ENCODE measurements at regions of chr1 and their contacts with region 1.

Region 1: GRCh38 chr1:203172128-203173010 is 3.3 kb downstream of the MYBPH start:
- DNase-seq: peak; percentile 77
- H3K4me3 ChIP-seq: no peak overlapping the region
- H3K27ac ChIP-seq: no peak overlapping the region
- H3K4me1 ChIP-seq: peaks cover 5 to 7% of the 10 kb centered on the region in 2 experiments; a peak in 2 of 4 replicates
- H3K27me3 ChIP-seq: no peaks in the 10 kb centered on the region
- CTCF ChIP-seq: peak; percentile 69
- EP300 ChIP-seq: no peak
- RAD21 ChIP-seq: peak; percentile 66

Region 2: GRCh38 chr1:202926720-202927491 is 245.5 kb before region 1 on chr1 and contains the start of gene KLHL12:
- CTCF ChIA-PET with region 1: no interaction called
- POLR2A ChIA-PET with region 1: no interaction called
- DNase-seq: peak; percentile 97
- H3K4me3 ChIP-seq: peak within 1 kb of the TSS; percentile 80 to 93
- H3K27ac ChIP-seq: peak within 1 kb of the TSS; percentile 77 to 95
- H3K4me1 ChIP-seq: peaks cover 9 to 24% of the 10 kb centered on the region in 2 experiments; a peak in 3 of 4 replicates
- H3K27me3 ChIP-seq: no peaks in the 10 kb centered on the region
- CTCF ChIP-seq: peak; percentile 71
- EP300 ChIP-seq: peak in 1 of 2 experiments; percentile 70; a peak in 2 of 4 replicates
- RAD21 ChIP-seq: peak; percentile 13; the same call in 1 of the 2 replicates
- polyA plus RNA-seq, gene KLHL12: 22.6 and 33.0 TPM in 2 replicates

Region 3: GRCh38 chr1:203026031-203026989 is 146.1 kb before region 1 on chr1 and contains the start of gene PPFIA4:
- CTCF ChIA-PET with region 1: interaction called, 13 read pairs
- POLR2A ChIA-PET with region 1: no interaction called
- DNase-seq: peak; percentile 99
- H3K4me3 ChIP-seq: peak within 1 kb of the TSS; percentile 70 to 74
- H3K27ac ChIP-seq: peak within 1 kb of the TSS in 1 of 2 experiments; percentile 58; a peak in 1 of 4 replicates
- H3K4me1 ChIP-seq: peaks cover 0 to 34% of the 10 kb centered on the region in 2 experiments; a peak in 1 of 4 replicates
- H3K27me3 ChIP-seq: no peaks in the 10 kb centered on the region
- CTCF ChIP-seq: no peak
- EP300 ChIP-seq: 0 out of 4 replicates have a peak, but pooled peaks of 1 of the 2 experiments have one; percentile 16
- RAD21 ChIP-seq: peak; percentile 45
- polyA plus RNA-seq, gene PPFIA4: 4.4 and 5.5 TPM in 2 replicates

Region 4: GRCh38 chr1:203038891-203039608 is 133.3 kb before region 1 on chr1:
- CTCF ChIA-PET with region 1: interaction called, 37 read pairs
- POLR2A ChIA-PET with region 1: no interaction called
- DNase-seq: peak; percentile 84
- H3K4me3 ChIP-seq: no peak overlapping the region; a peak in 1 of 4 replicates
- H3K27ac ChIP-seq: peak overlapping the region in 1 of 2 experiments; percentile 50; a peak in 1 of 4 replicates
- H3K4me1 ChIP-seq: peaks cover 20 to 42% of the 10 kb centered on the region in 2 experiments; a peak in 3 of 4 replicates
- H3K27me3 ChIP-seq: no peaks in the 10 kb centered on the region
- CTCF ChIP-seq: peak; percentile 97
- EP300 ChIP-seq: no peak
- RAD21 ChIP-seq: peak; percentile 93

Region 5: DNA sequence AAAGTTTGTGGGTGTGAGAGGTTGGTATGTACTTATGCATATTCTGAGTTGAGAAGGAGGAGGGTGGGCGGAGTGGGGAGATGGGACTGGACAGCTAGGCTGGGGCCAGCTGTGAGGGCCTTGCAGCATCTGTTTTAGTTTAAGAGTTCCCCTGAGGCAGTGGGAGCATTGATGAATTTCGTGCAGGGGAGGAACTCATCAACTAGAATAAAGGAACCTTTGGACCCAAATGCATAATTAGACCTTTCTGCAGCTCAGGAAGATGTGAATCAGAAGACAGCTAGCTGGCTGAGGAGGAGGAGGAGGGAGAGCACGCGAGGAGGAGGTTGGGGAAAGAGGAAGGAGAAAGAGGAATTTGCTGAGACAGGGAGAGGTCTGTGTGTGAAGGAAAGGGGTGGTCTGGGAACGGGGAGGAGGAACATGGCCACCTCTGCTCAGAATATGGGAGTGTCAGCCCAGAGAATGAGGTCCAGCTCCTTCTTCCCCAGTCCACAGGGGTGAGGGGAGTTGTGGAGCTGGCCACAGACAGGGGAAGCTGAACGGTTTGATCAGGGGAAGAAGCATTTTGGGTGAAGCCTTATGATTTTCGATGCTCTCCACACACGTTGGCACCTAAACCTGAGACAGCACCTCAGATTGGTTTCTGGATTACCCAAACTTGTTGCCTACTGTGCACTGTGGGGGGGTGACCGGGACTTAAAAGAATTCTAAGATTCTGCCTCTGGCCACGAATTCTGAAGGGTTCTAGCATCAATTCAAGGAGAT is 114.3 kb before region 1 on chr1:
- CTCF ChIA-PET with region 1: no interaction called
- POLR2A ChIA-PET with region 1: no interaction called
- DNase-seq: peak; percentile 83
- H3K4me3 ChIP-seq: no peak overlapping the region
- H3K27ac ChIP-seq: no peak overlapping the region
- H3K4me1 ChIP-seq: peaks cover 0 to 22% of the 10 kb centered on the region in 2 experiments; a peak in 1 of 4 replicates
- H3K27me3 ChIP-seq: no peaks in the 10 kb centered on the region
- CTCF ChIP-seq: no peak
- EP300 ChIP-seq: no peak
- RAD21 ChIP-seq: no peak

Region 6: DNA sequence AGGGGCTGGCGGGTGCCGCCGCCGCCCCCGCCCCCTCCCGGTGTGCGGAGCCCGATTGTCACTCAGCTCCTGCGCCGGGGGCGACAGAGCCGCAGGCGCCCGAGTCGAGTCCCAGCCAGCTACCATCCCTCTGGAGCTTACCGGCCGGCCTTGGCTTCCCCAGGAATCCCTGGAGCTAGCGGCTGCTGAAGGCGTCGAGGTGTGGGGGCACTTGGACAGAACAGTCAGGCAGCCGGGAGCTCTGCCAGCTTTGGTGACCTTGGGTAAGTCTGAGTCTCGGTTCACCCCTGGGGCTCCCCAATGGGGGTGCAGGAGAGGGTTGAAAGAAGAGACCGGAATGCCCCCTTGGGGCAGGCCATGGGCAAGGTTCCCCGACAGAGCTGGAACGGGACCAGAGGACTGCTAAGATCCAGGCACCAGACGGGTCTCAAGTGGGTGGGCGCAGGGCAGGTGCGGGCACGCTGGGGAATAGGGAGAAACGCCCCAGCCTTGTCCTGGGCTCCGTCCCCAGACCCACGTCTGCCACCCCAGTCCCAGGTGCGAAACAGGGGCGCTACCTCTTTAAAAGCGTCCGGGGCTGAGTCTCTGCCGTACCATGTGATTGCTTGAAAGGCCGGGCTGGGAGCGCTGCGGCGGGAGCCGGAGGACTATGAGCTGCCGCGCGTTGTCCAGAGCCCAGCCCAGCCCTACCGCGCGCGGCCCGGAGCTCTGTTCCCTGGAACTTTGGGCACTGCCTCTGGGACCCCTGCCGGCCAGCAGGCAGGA is 44.5 kb before region 1 on chr1 and contains the start of gene ADORA1:
- CTCF ChIA-PET with region 1: interaction called, 18 read pairs
- POLR2A ChIA-PET with region 1: no interaction called
- DNase-seq: peak; percentile 80
- H3K4me3 ChIP-seq: peak within 1 kb of the TSS; percentile 48 to 55
- H3K27ac ChIP-seq: no peak within 1 kb of the TSS
- H3K4me1 ChIP-seq: peaks cover 21 to 69% of the 10 kb centered on the region in 2 experiments
- H3K27me3 ChIP-seq: no peaks in the 10 kb centered on the region; the same call in 1 of the 2 replicates
- CTCF ChIP-seq: peak; percentile 28; the same call in 1 of the 2 replicates
- EP300 ChIP-seq: no peak
- RAD21 ChIP-seq: no peak
- polyA plus RNA-seq, gene ADORA1: 3.2 and 4.8 TPM in 2 replicates

Region 7: DNA sequence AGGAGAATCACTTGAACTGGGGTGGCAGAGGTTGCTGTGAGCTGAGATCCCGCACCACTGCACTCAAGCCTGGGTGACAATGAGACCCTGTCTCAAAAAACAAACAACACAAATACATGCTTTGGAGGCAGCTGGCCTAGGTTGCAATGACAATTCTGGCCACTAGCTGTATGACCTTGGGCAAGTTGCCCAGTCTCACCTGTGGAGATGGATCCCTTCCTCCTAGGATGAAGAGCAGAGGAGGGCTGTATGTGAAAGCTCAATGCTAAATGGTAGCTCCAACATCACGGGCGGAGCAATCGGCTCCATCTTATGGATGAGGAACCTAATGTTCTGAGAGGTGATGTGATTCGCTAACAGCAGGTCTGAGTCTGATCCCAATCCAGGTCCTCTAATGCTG is 24.2 kb before region 1 on chr1:
- CTCF ChIA-PET with region 1: interaction called, 12 read pairs
- POLR2A ChIA-PET with region 1: no interaction called
- DNase-seq: no peak
- H3K4me3 ChIP-seq: no peak overlapping the region
- H3K27ac ChIP-seq: no peak overlapping the region
- H3K4me1 ChIP-seq: peaks cover 18 to 48% of the 10 kb centered on the region in 2 experiments; a peak in 3 of 4 replicates
- H3K27me3 ChIP-seq: no peaks in the 10 kb centered on the region
- CTCF ChIP-seq: peak; percentile 51
- EP300 ChIP-seq: no peak
- RAD21 ChIP-seq: no peak

Region 8: DNA sequence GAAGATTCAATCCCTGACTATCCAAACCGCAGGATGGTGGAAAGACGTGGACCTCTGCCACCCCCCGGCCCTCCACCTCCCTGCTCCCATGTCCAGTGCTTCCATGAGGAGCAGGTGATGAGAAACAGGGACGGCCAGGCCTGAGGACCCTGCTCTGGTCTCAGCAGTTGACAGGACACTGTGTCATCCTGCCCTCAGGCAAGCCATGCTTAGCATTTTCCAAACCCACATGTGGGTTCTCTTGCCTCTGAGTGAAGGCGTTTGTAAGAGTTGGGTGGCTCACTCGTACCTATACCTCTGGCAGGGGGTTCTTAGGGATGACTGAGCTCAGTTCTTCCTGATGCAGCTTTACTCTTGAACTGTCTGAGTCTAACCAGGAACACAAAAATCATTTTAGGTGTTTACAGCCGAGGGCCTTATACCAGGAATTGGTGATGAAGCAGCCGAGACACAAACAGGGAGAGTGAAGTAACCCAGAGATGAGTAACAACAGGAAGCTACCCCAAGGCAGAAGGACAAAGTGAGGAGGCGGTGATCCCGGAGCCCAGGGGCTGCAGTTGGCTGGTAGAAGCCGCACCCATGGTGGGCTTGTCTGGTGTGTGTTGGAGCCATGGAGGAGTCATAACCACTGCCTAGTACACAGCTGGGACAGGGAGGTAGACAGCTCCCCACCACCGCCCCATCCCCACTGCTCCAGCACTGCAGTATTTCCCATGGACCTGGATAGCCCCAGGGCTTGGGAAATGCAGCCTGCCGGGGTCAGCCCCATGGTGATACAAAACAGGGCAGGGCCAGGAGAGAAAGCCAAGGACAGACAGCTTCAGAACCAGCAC is 18.2 kb before region 1 on chr1:
- CTCF ChIA-PET with region 1: interaction called, 10 read pairs
- POLR2A ChIA-PET with region 1: no interaction called
- DNase-seq: peak; percentile 55
- H3K4me3 ChIP-seq: no peak overlapping the region
- H3K27ac ChIP-seq: peak overlapping the region; percentile 44 to 48
- H3K4me1 ChIP-seq: peaks cover 28 to 38% of the 10 kb centered on the region in 2 experiments
- H3K27me3 ChIP-seq: no peaks in the 10 kb centered on the region
- CTCF ChIP-seq: no peak
- EP300 ChIP-seq: peak; percentile 3 to 27; a peak in 2 of 4 replicates
- RAD21 ChIP-seq: no peak

Region 9: DNA sequence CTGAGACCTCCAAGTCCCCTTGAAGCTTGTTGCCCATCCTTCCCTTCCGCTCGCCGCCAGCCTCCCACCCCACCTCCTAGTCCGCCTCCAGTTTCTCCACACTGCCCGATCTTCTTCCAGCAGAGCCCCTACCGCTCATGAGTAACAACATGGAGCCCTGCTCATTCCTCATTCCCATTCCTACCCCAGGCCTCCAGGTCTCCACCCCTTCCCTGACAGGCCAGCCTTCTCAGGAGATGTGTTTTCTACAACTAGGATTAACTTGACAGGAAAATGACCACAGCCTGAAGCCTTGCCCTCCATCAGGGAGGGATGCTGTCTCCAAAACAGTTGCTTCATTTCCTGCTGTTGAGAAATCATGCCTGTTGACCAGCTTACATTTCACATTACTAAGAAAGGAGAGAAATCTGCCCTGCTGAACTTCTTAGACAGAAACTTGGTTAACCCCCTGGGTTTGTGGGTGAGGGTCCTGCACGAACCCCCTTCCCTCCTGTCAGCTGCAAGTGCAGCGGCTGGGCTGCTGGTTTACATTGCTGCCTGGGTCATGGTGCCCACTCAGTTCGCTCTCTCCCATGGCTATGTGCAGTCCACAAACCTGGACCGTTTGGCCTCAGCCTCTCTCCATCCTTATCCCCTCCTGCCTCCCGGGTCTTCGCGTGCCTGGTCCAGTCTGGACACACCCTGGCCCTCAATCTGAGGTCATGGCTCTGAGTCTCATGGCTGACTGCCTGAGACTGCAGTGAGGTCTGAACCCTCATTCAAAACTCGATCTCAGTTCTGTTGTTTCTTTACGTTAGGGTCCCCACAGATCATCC is 30.3 kb after region 1 on chr1:
- CTCF ChIA-PET with region 1: interaction called, 15 read pairs
- POLR2A ChIA-PET with region 1: no interaction called
- DNase-seq: no peak
- H3K4me3 ChIP-seq: no peak overlapping the region
- H3K27ac ChIP-seq: no peak overlapping the region
- H3K4me1 ChIP-seq: no peaks in the 10 kb centered on the region; a peak in 1 of 4 replicates
- H3K27me3 ChIP-seq: peaks cover 9% of the 10 kb centered on the region; the same call in 1 of the 2 replicates
- CTCF ChIP-seq: no peak
- EP300 ChIP-seq: no peak
- RAD21 ChIP-seq: no peak

Region 10: GRCh38 chr1:203244776-203245175 is 72.4 kb after region 1 on chr1:
- CTCF ChIA-PET with region 1: no interaction called
- POLR2A ChIA-PET with region 1: no interaction called
- DNase-seq: no peak
- H3K4me3 ChIP-seq: no peak overlapping the region
- H3K27ac ChIP-seq: no peak overlapping the region
- H3K4me1 ChIP-seq: no peaks in the 10 kb centered on the region
- H3K27me3 ChIP-seq: no peaks in the 10 kb centered on the region
- CTCF ChIP-seq: no peak
- EP300 ChIP-seq: no peak
- RAD21 ChIP-seq: no peak